AG04450 (cell line): ENCODE measurements at regions of chr16 and their contacts with region 1.

Region 1: DNA sequence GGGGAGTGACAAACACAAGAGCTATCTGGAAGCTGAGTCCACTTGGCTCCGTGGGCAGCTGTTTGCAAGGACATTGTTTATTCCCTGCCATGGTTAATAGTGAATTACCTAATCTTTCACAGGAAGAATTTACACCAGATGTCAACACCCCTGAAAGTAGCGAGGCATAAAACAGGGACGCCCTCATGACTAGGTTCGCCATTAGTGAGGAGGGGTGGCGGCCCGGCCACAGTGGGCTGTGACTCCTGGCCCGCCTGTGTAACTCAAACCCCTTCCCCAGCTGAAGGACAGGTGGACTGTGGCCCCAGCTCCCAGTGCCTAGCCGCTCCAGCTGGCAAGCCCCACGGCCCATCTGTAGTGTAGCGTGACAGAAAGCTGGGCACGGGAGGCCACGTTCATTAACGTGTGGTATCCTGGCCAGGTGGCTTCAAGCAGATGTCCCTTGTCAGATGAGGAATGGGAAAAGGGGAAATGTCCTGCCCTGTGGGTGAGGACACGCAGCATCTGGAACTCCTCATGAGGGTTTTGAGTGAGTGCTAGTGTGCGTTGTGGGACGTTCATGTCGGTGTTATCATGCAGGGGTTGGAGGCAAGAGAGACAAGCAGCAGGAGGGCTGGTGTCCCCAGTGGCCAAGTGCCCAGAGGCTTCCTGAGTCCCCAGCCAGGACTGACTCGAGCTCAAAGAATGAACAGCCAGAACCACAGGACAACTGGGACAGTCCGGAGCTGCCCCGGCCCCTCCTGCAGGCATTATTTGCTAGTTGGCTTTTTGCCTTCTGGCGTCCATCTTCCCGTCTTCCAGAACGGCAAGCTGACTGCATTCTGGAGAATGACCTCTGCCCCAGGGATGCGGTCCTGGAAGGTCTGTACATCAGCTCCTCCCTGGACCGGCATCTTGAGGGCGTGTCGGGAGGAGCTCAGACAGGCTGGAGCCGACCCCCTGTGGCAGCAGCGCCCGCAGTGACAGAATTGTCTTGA is 19.2 kb downstream of the KDM8 start:
- DNase-seq: no peak
- H3K4me3 ChIP-seq: no peak overlapping the region
- H3K27ac ChIP-seq: peak overlapping the region; percentile 80
- H3K27me3 ChIP-seq: no peaks in the 10 kb centered on the region
- CTCF ChIP-seq: no peak

Region 2: DNA sequence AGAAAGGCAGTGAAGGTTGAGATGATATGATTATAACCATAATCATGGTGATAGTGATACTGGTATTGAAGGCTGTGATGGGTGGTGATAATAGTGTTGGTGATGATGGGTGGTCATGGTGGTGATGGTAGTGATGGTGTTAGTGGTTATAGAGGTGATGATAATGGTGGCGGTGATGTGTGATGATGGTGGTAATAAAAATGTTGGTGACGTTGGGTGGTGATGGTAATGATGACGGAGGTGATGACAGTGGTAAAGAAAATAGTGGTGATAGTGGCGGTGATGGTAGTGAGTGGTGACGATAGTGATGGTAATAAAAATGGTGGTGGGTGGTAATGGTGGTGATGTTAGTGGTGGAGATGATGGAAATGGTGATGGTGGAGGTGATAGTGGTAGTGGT is 84.3 kb before region 1 on chr16:
- CTCF ChIA-PET with region 1: no interaction called
- POLR2A ChIA-PET with region 1: no interaction called
- DNase-seq: no peak
- H3K4me3 ChIP-seq: no peak overlapping the region
- H3K27ac ChIP-seq: no peak overlapping the region
- H3K27me3 ChIP-seq: peaks cover 3% of the 10 kb centered on the region
- CTCF ChIP-seq: no peak

Region 3: GRCh38 chr16:27203429-27204231 is 18.9 kb before region 1 on chr16 and contains the start of gene KDM8:
- CTCF ChIA-PET with region 1: no interaction called
- POLR2A ChIA-PET with region 1: interaction called, 11 read pairs
- DNase-seq: peak; percentile 99
- H3K4me3 ChIP-seq: peak within 1 kb of the TSS; percentile 93
- H3K27ac ChIP-seq: peak within 1 kb of the TSS; percentile 98
- H3K27me3 ChIP-seq: no peaks in the 10 kb centered on the region
- CTCF ChIP-seq: no peak
- polyA plus RNA-seq, gene KDM8: 2.5 and 2.8 TPM in 2 replicates